Heart right ventricle (tissue), 16 donors: ENCODE measurements at regions of chr3 and their contacts with region 1.

Region 1: GRCh38 chr3:129224984-129225393 is 24.4 kb upstream of the COPG1 start:
- DNase-seq: peak; percentile 82 to 87
- ATAC-seq: peak; percentile 91 to 96 (median 93)
- H3K4me3 ChIP-seq: peak overlapping the region in 7 of 10 donors; percentile 15 to 31 (median 25)
- H3K27ac ChIP-seq: peak overlapping the region; percentile 72 to 94 (median 86)
- H3K4me1 ChIP-seq: peaks cover 10 to 63% (median 56%) of the 10 kb centered on the region in 9 donors
- H3K27me3 ChIP-seq: no peaks in the 10 kb centered on the region
- CTCF ChIP-seq: no peak

Region 2: DNA sequence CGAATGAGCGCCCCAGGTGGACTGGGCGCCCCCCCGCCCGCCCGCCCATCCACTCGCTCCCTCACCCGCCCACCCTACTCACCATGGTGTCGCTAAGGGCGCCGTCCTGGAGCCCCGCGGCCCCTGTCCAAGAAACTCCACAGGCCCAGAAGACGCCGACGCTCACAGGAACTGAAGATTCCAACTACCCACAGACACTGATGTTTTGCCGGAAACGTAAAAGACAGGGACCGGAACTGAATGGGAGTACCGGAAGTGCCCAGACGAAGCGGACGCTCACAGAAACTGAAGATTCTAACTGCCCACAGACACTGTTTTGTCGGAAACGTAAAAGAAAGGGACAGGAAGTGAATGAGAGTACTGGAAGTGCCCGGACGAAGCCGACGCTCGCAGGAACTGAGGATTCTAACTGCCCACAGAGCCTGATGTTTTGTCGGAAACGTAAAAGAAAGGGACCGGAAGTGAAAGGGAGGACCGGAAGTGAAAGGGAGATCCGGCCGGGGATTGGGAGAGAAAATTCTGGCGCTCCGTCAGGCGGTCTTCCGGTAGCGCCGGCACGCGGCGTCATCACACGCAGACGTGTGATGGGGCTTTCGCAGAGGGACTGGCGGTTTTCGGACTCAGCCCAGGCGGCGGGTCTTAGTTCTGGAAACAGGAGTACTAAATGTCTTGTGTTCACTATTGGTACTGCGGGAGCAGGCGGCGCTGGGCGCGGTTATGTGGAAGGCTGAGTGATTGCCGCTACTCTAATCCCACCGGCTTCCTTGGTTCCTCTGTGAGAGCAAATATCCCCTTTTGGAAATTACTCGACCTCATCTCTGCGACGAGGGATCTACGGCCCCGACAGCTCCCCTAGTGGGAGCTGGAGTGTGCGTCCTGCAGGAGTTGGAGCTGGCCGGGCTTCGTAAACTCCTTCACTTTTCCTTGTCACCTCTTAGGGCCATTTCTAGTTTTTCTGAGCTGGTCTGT is 63.8 kb before region 1 on chr3 and contains the start of gene ISY1:
- intact Hi-C with region 1: loop called in 1 of 10 experiments (anchors 1 kb)
- DNase-seq: peak; percentile 87 to 94
- ATAC-seq: peak; percentile 91 to 98 (median 95)
- H3K4me3 ChIP-seq: peak within 1 kb of the TSS; percentile 68 to 95 (median 78)
- H3K27ac ChIP-seq: peak within 1 kb of the TSS; percentile 72 to 99 (median 92)
- H3K4me1 ChIP-seq: peaks cover 8 to 33% (median 21%) of the 10 kb centered on the region in 9 donors
- H3K27me3 ChIP-seq: no peaks in the 10 kb centered on the region
- CTCF ChIP-seq: peak; percentile 44 to 83 (median 75)
- total RNA-seq, gene ISY1: 26.7 to 35.4 (median 29.7) TPM

Region 3: DNA sequence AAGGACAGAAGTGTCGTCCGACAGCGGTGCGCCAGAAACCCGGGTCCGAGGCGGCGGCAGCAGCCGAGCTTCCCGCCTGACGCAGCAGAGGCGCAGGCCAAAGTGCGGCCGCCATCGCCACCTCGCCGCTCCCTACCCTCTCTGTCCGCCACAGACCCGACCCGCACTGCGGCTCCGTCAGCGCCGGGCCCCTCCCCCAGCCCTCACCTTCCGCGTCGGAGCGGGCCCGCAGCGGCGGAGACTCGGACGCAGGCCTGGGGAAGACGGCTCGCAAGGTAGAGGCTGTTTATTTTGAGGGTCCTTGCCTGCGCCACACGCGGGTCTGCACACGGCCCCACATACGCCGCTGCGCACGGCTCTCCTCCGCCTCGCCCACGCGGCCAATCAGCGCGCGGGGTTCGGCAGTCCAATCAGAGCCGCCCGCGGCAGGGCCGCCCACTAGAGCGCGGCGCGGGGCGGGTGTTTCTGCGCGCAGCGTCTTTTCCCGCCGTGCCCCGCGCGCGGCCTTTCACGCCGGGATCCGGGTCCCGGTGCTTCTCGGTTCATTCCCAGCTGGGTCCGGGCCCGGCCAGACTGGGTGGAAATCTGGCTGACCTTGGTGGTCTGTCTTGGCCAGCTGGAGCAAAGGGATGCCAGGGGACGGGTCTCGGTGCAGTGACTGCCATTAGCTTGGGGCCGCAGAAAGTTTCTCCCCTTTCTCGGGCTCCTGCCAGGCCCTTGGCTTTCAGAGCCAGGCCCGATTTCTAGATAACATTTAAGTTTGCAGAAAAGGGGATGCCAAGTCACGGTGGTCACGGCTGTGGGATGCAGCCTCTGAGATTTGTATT is 41.2 kb before region 1 on chr3 and contains the start of gene CNBP:
- intact Hi-C with region 1: loop called in 7 of 10 experiments (anchors 2 to 5 kb)
- DNase-seq: peak; percentile 94
- ATAC-seq: peak; percentile 98 to 99 (median 99)
- H3K4me3 ChIP-seq: peak within 1 kb of the TSS; percentile 75 to 97 (median 92)
- H3K27ac ChIP-seq: peak within 1 kb of the TSS; percentile 94 to 100 (median 99)
- H3K4me1 ChIP-seq: peaks cover 7 to 68% (median 52%) of the 10 kb centered on the region in 9 donors
- H3K27me3 ChIP-seq: no peaks in the 10 kb centered on the region
- CTCF ChIP-seq: peak in 1 of 9 donors; percentile 8
- total RNA-seq, gene CNBP: 438 to 594 (median 487) TPM

Region 4: GRCh38 chr3:129195731-129196256 is 29.2 kb before region 1 on chr3:
- intact Hi-C with region 1: loop called in 2 of 10 experiments (anchors 1 to 2 kb)
- DNase-seq: peak in 1 of 2 donors; percentile 74
- ATAC-seq: peak; percentile 86 to 99 (median 94)
- H3K4me3 ChIP-seq: peak overlapping the region in 2 of 10 donors; percentile 14
- H3K27ac ChIP-seq: peak overlapping the region; percentile 76 to 94 (median 88)
- H3K4me1 ChIP-seq: peaks cover 2 to 55% (median 37%) of the 10 kb centered on the region in 9 donors
- H3K27me3 ChIP-seq: no peaks in the 10 kb centered on the region
- CTCF ChIP-seq: no peak